Psoas muscle (tissue), 8 donors: ENCODE measurements at regions of chr17 and their contacts with region 1.

Region 1: GRCh38 chr17:2416010-2416734 is 15.3 kb upstream of the MNT start:
- DNase-seq: peak; percentile 90 to 93
- ATAC-seq: peak; percentile 75 to 85 (median 77)
- H3K4me3 ChIP-seq: no peak overlapping the region
- H3K27ac ChIP-seq: peak overlapping the region; percentile 80
- H3K4me1 ChIP-seq: peaks cover 33% of the 10 kb centered on the region
- H3K27me3 ChIP-seq: no peaks in the 10 kb centered on the region
- CTCF ChIP-seq: peak; percentile 98

Region 2: GRCh38 chr17:2369551-2370210 is 46.5 kb before region 1 on chr17:
- intact Hi-C with region 1: loop called in 1 of 2 experiments (anchors 10 kb)
- DNase-seq: no peak
- ATAC-seq: no peak
- H3K4me3 ChIP-seq: no peak overlapping the region
- H3K27ac ChIP-seq: no peak overlapping the region
- H3K4me1 ChIP-seq: peaks cover 5% of the 10 kb centered on the region
- H3K27me3 ChIP-seq: no peaks in the 10 kb centered on the region
- CTCF ChIP-seq: no peak

Region 3: DNA sequence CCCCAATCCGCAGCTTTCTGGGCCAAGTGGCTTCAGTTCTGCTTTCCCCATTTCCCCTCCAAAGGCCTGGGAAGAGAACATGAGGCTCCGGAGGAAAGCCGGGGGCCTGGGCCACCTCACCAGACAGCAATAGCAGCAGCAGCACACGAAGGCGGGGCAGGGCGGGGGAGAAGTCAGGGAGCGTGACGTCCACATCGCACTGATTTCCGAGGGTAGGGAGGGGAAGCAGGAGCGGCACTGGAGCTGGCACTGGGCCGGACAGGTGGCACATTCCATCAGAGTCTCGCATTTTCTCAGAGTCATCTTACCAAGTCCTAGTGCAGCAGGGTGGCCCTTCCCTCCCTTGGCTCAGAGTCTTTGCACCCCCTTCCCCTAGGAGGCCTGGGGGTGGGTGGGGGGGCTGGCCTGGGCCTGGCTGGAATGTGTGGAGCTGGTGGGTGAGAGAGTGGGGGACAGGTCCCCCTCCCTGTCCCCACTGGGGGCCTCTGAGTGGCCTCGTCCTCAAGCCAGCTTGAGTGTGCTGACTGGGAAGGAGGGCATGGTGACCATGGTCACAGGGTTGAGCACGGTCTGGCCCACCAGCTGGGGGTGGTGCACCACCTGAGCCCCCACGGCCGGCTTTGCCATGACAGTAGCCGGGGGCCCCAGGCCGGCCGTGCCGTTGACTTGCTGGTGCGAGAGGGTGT is 29.6 kb before region 1 on chr17:
- intact Hi-C with region 1: loop called (anchors 1 to 2 kb)
- DNase-seq: peak in 1 of 2 donors; percentile 11
- ATAC-seq: no peak
- H3K4me3 ChIP-seq: no peak overlapping the region
- H3K27ac ChIP-seq: peak overlapping the region; percentile 39
- H3K4me1 ChIP-seq: peaks cover 67% of the 10 kb centered on the region
- H3K27me3 ChIP-seq: no peaks in the 10 kb centered on the region
- CTCF ChIP-seq: no peak

Region 4: DNA sequence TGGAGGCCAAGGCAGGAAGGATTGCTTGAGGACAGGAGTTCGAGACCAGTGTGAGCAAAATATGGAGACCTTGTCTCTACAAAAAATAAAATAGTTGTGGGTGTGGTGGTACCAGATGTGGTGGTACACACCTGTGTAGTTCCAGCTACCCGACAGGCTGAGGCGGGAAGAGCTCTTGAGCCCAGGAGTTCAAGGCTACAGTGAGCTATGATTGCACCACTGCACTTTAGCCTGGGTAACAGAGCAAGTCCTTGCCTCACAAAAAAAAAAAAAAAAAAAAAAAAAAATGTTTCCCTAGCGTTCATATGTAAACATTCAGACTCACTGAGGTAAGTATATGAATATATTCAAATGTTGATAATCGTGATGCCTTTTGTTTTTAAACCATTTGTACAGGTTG is 255.9 kb after region 1 on chr17:
- intact Hi-C with region 1: no loop called
- DNase-seq: no peak
- ATAC-seq: no peak
- H3K4me3 ChIP-seq: no peak overlapping the region
- H3K27ac ChIP-seq: no peak overlapping the region
- H3K4me1 ChIP-seq: no peaks in the 10 kb centered on the region
- H3K27me3 ChIP-seq: no peaks in the 10 kb centered on the region
- CTCF ChIP-seq: no peak